AG04450 (cell line): ENCODE measurements at regions of chr5 and their contacts with region 1.

Region 1: DNA sequence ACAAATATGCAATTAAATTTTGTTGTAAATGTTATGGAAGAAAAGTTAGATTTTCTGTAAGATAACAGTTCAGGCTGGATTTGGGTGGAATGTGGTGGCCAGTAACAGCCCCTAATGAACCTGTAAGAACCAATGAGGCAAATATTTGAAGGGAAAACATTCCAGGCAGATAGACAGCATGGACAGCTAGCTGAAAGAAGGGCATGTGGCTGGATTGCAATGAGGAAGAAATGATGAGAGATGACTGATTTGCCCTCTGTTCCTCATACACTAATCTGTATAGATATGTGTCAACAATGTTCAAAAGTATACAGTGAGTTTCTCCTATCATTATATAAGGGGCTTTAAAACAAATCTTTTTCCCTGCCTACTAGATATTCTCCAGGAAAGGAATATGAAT is 58.8 kb downstream of the MAN2A1 start:
- DNase-seq: no peak
- H3K4me3 ChIP-seq: no peak overlapping the region
- H3K27ac ChIP-seq: no peak overlapping the region
- H3K27me3 ChIP-seq: no peaks in the 10 kb centered on the region
- CTCF ChIP-seq: no peak

Region 2: GRCh38 chr5:109688971-109689739 is 59.4 kb before region 1 on chr5:
- CTCF ChIA-PET with region 1: interaction called, 11 read pairs
- POLR2A ChIA-PET with region 1: interaction called, 4 read pairs
- DNase-seq: peak; percentile 54
- H3K4me3 ChIP-seq: peak overlapping the region; percentile 87
- H3K27ac ChIP-seq: peak overlapping the region; percentile 86
- H3K27me3 ChIP-seq: no peaks in the 10 kb centered on the region
- CTCF ChIP-seq: no peak